IMR-90 (cell line): ENCODE measurements at regions of chr19 and their contacts with region 1.

Region 1: GRCh38 chr19:1285737-1286360 is at the start of gene EFNA2:
- DNase-seq: no peak
- ATAC-seq: peak; percentile 64
- H3K4me3 ChIP-seq: peak within 1 kb of the TSS; percentile 20
- H3K27ac ChIP-seq: no peak within 1 kb of the TSS
- H3K4me1 ChIP-seq: no peaks in the 10 kb centered on the region
- H3K27me3 ChIP-seq: peaks cover 43% of the 10 kb centered on the region
- CTCF ChIP-seq: 0 out of 2 replicates have a peak, but pooled peaks have one; percentile 6
- POLR2A ChIP-seq: no peak
- RAD21 ChIP-seq: no peak
- total RNA-seq, gene EFNA2: not detected in 2 replicates

Region 2: GRCh38 chr19:1039646-1040475 is 246.0 kb before region 1 on chr19 and contains the start of gene ABCA7:
- CTCF ChIA-PET with region 1: no interaction called
- POLR2A ChIA-PET with region 1: no interaction called
- dilution Hi-C with region 1: no loop called
- in situ Hi-C with region 1: no loop called
- intact Hi-C with region 1: no loop called
- DNase-seq: peak; percentile 96
- ATAC-seq: peak; percentile 85
- H3K4me3 ChIP-seq: peak within 1 kb of the TSS; percentile 44
- H3K27ac ChIP-seq: no peak within 1 kb of the TSS
- H3K4me1 ChIP-seq: peaks cover 7% of the 10 kb centered on the region; the same call in 1 of the 2 replicates
- H3K27me3 ChIP-seq: no peaks in the 10 kb centered on the region
- CTCF ChIP-seq: no peak
- POLR2A ChIP-seq: peak; percentile 73
- RAD21 ChIP-seq: no peak; the same call in 1 of the 2 replicates
- total RNA-seq, gene ABCA7: 0.36 and 0.56 TPM in 2 replicates

Region 3: DNA sequence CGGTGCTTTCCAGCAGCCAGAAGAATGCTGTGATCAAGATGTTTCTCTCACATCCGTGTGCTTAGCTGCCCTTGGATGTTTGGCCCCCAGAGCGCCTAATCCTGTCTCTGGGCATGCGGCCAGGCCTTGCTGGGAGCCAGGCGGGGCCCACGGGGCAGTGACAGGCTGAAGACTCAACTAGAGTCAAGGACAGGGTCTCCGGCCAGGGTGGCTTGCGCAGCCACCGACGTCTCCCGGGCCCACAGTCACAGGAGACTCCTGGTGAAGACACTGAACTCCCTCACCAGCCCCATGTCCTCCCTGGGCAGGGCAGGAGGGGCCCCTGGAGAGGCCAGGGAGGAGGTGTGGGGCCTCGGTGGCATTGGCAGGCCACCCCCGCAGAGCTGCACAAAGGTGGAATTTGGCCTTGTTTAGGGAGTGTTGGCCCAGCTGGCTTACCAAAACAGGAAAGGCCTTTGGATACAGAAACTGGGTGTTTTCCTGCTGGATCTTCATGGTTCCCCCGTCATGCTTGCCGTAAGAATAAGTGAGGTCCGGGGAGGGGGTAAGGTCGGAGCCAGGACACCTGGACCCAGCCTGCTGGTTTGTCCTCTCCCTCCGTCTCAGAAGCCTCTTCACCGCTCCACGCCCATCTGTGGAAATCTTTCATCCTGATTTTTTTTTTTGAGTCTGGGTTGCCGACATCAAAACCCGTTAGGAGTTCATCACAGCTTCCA is 87.8 kb after region 1 on chr19:
- CTCF ChIA-PET with region 1: no interaction called
- POLR2A ChIA-PET with region 1: no interaction called
- dilution Hi-C with region 1: no loop called
- in situ Hi-C with region 1: no loop called
- intact Hi-C with region 1: loop called (anchors 2 kb)
- DNase-seq: peak; percentile 66
- ATAC-seq: peak; percentile 83
- H3K4me3 ChIP-seq: no peak overlapping the region
- H3K27ac ChIP-seq: 0 out of 2 replicates have a peak overlapping the region, but pooled peaks have one; percentile 7
- H3K4me1 ChIP-seq: peaks cover 9% of the 10 kb centered on the region
- H3K27me3 ChIP-seq: no peaks in the 10 kb centered on the region
- CTCF ChIP-seq: no peak
- POLR2A ChIP-seq: no peak
- RAD21 ChIP-seq: no peak